Activated B cell treated with CpG ODN at 0.5 μM for 24 hours (primary cell): ENCODE measurements at regions of chr4 and their contacts with region 1.

Region 1: GRCh38 chr4:113547487-113548042 is 214.0 kb downstream of the CAMK2D start:
- DNase-seq: peak; percentile 62
- ATAC-seq: peak; percentile 98
- H3K4me3 Mint-ChIP-seq: no peak overlapping the region
- H3K27ac Mint-ChIP-seq: peak overlapping the region; percentile 69
- H3K4me1 Mint-ChIP-seq: peaks cover 23% of the 10 kb centered on the region
- H3K27me3 Mint-ChIP-seq: no peaks in the 10 kb centered on the region
- CTCF ChIP-seq: peak; percentile 67

Region 2: DNA sequence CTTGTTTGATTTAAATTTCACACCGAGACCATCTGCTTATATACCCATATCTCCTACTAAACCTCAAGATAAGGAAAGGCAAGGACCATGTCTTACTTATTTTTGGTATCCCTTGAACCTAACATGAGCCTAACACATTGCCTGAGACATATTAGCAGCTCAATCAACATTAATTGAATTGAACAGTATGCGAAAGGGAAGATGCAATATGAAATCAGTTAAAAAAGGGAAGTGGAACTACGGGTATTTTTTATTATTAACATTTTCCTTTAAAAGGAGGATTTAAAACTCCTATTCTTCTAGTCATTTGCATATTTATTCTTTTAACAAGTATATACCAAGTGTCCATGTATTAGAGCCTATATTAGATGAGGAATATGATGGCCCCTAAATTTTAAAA is 16.9 kb after region 1 on chr4:
- CTCF ChIA-PET with region 1: interaction called, 41 read pairs
- POLR2A ChIA-PET with region 1: interaction called, 35 read pairs
- intact Hi-C with region 1: loop called (anchors 1 kb)
- DNase-seq: no peak
- ATAC-seq: peak; percentile 59
- H3K4me3 Mint-ChIP-seq: peak overlapping the region; percentile 81
- H3K27ac Mint-ChIP-seq: peak overlapping the region; percentile 97
- H3K4me1 Mint-ChIP-seq: peaks cover 87% of the 10 kb centered on the region
- H3K27me3 Mint-ChIP-seq: no peaks in the 10 kb centered on the region
- CTCF ChIP-seq: no peak

Region 3: DNA sequence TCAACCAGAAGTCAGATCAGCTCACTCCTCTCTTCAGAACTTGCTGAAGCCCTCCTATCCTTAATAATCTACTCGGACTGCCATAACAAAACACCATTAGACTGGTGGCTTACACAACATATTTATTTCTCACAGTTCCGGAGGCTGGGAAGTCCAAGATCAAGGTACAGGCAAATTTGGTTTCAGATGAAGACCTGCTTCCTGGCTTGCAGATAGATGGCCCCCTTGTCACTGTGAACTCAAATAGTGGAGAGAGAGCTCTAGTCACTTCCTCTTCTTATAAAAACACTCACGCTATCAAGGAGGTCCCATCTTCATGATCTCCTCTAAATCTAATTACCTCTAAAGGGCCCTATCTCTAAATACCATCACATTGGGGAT is 88.9 kb after region 1 on chr4:
- CTCF ChIA-PET with region 1: interaction called, 28 read pairs
- POLR2A ChIA-PET with region 1: interaction called, 8 read pairs
- intact Hi-C with region 1: loop called (anchors 1 kb)
- DNase-seq: no peak
- ATAC-seq: peak; percentile 73
- H3K4me3 Mint-ChIP-seq: peak overlapping the region; percentile 49
- H3K27ac Mint-ChIP-seq: peak overlapping the region; percentile 88
- H3K4me1 Mint-ChIP-seq: peaks cover 76% of the 10 kb centered on the region
- H3K27me3 Mint-ChIP-seq: no peaks in the 10 kb centered on the region
- CTCF ChIP-seq: no peak

Region 4: GRCh38 chr4:113781439-113782040 is 234.0 kb after region 1 on chr4:
- CTCF ChIA-PET with region 1: interaction called, 4 read pairs
- POLR2A ChIA-PET with region 1: no interaction called
- intact Hi-C with region 1: loop called (anchors 1 kb)
- DNase-seq: no peak
- ATAC-seq: no peak
- H3K4me3 Mint-ChIP-seq: no peak overlapping the region
- H3K27ac Mint-ChIP-seq: no peak overlapping the region
- H3K4me1 Mint-ChIP-seq: no peaks in the 10 kb centered on the region
- H3K27me3 Mint-ChIP-seq: no peaks in the 10 kb centered on the region
- CTCF ChIP-seq: peak; percentile 76

Region 5: GRCh38 chr4:113908829-113909228 is 361.3 kb after region 1 on chr4:
- CTCF ChIA-PET with region 1: no interaction called
- POLR2A ChIA-PET with region 1: no interaction called
- intact Hi-C with region 1: loop called (anchors 1 kb)
- DNase-seq: no peak
- ATAC-seq: no peak
- H3K4me3 Mint-ChIP-seq: no peak overlapping the region
- H3K27ac Mint-ChIP-seq: no peak overlapping the region
- H3K4me1 Mint-ChIP-seq: no peaks in the 10 kb centered on the region
- H3K27me3 Mint-ChIP-seq: peaks cover 2% of the 10 kb centered on the region
- CTCF ChIP-seq: no peak